Left colon (tissue), 2 donors: ENCODE measurements at regions of chr17 and their contacts with region 1.

Region 1: GRCh38 chr17:49997791-49998703 is 3.0 kb upstream of the DLX3 start:
- DNase-seq: peak; percentile 69 to 75
- ATAC-seq: peak; percentile 82

Region 2: DNA sequence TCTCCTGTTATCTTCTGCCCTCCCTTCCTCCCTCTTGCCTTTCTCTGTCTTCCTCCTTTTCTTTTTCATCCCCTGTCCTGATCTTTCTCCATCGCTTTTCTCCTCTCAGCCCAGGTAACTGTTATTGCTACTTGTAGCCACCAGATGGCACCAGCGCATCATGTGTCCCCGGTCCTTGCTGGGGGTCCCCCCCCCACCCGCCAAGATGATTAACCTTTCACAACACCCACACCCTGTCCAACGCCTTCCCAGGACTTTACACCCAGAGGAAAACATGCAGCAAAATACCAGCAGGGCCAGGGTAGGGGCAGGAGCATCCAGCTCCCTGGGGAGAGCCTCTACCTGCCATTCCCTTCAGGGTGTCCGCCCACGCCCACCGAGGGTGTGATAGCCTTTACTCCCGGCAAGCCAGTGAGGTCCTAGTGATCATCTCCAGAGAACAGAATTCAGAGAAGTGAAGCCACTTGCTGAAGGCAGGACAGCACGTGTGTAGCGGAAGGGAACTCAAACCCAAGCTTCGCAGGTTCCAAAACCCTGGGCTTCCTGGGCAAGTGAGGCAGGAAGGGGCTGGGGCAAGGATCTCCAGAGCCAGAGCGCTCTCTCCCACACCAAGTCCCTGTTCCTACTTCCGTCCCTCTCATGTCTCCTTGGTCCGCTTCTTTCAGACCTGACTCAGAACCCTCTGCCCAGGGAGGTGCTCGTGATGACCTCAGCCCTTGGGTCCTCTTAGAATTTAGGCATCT is 136.7 kb before region 1 on chr17:
- intact Hi-C with region 1: loop called (anchors 5 kb)
- DNase-seq: peak in 1 of 2 donors; percentile 66
- ATAC-seq: peak; percentile 64

Region 3: DNA sequence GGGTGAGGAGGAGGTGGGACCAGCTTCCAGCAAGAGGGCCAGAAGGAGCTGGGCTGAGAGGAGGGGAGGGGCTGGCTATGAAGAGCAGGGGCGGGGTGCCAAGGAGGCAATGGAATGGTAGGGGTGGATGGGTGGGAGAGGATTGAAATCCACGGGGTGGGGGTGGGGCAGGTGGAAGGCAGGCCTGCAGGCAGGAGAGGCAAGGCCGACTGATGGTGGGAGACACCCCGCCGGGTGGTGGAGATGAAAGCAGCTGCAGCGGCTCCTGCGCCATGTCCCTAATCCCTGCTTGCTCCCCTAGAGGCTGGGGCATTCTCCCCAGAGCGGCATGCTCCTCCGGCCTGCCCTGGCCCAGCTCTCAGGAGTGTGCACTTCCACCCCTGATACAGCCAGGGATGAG is 122.4 kb before region 1 on chr17:
- intact Hi-C with region 1: loop called in 1 of 2 experiments (anchors 5 kb)
- DNase-seq: no peak
- ATAC-seq: no peak

Region 4: DNA sequence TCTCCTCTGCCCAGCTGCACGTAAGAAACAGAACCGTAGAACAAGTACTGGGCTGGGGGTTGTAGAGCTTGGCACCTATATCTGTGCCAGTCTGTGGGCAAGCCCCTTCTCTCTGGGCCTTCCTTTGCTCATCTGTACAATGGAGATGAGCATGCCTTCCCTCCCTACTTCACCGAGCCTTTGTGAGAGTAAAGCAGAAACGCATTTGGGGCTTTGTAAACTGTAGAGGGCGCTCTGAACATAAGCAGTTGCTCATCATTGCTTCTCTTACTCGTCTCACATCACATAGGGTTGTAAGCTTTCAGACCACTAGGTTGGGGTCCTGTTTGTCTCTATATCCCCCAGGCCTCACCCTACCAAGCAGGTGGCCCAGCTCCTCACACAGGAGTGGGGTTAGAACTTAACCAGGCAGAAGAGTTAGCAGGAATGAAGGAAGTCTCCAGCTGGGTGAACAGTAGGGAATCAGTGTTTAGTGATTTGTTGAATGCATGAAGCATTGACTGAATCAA is 116.9 kb after region 1 on chr17:
- intact Hi-C with region 1: no loop called
- DNase-seq: no peak
- ATAC-seq: peak; percentile 18